ENCODE measurements at regions of chr12 and their contacts with region 1.

Region 1: DNA sequence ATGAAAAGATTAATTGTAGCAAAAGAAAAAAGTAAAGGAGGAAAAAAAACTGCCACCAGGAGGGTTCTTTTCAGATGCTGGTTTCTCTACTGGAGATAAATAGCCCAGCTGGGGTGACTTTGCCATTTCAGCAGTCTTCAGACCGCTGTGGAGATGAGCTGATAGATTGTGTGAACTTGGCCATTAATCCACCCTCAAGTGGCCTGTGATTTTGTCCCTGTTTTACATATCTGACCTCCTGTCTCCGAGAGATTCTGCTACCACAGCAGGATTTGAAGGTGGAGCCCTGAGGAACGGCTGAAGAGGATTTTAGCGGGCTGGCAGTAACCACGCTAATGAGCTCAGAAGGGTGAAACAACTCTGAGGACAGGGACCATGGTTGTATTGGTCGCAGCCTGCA is 72.7 kb downstream of the WSCD2 start:
- DNase-seq: no peak
- H3K4me3 ChIP-seq: no peak overlapping the region
- H3K27ac ChIP-seq: no peak overlapping the region
- H3K4me1 ChIP-seq: no peaks in the 10 kb centered on the region
- H3K27me3 ChIP-seq: peaks cover 31% of the 10 kb centered on the region
- CTCF ChIP-seq: no peak

Region 2: GRCh38 chr12:107984970-107985369 is 216.8 kb before region 1 on chr12:
- intact Hi-C with region 1: loop called (anchors 5 kb)
- DNase-seq: no peak
- H3K4me3 ChIP-seq: no peak overlapping the region
- H3K27ac ChIP-seq: no peak overlapping the region
- H3K4me1 ChIP-seq: no peaks in the 10 kb centered on the region
- H3K27me3 ChIP-seq: peaks cover 88% of the 10 kb centered on the region
- CTCF ChIP-seq: no peak

Region 3: DNA sequence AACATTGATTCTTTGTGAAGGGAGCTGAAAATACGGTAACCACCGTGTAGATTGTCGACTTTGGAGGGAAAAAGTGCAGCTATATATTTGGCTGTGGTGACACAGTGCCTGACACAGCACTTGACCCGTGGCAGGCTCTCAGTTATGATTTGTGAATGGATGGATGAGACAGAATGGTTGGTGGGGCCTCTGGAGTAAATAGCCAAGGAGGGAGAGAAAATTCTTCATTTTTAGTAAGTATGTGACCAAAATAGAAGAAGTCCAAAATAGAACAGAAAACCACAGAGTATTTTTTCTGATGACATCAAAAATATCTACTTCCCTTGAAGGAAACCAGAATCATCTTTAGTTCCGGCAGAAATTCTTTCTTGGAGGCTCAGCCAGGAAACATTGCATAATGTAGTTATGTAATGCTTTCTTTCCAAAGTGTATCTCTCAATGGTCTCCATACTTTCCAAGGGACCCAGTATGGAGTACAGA is 154.7 kb before region 1 on chr12:
- intact Hi-C with region 1: no loop called
- DNase-seq: no peak
- H3K4me3 ChIP-seq: peak overlapping the region; percentile 24
- H3K27ac ChIP-seq: peak overlapping the region; percentile 63
- H3K4me1 ChIP-seq: peaks cover 8% of the 10 kb centered on the region
- H3K27me3 ChIP-seq: peaks cover 56% of the 10 kb centered on the region
- CTCF ChIP-seq: no peak

Region 4: GRCh38 chr12:108289350-108290161 is 87.7 kb after region 1 on chr12:
- intact Hi-C with region 1: no loop called
- DNase-seq: peak; percentile 72
- H3K4me3 ChIP-seq: no peak overlapping the region
- H3K27ac ChIP-seq: peak overlapping the region; percentile 82
- H3K4me1 ChIP-seq: peaks cover 26% of the 10 kb centered on the region
- H3K27me3 ChIP-seq: peaks cover 9% of the 10 kb centered on the region
- CTCF ChIP-seq: no peak

Region 5: DNA sequence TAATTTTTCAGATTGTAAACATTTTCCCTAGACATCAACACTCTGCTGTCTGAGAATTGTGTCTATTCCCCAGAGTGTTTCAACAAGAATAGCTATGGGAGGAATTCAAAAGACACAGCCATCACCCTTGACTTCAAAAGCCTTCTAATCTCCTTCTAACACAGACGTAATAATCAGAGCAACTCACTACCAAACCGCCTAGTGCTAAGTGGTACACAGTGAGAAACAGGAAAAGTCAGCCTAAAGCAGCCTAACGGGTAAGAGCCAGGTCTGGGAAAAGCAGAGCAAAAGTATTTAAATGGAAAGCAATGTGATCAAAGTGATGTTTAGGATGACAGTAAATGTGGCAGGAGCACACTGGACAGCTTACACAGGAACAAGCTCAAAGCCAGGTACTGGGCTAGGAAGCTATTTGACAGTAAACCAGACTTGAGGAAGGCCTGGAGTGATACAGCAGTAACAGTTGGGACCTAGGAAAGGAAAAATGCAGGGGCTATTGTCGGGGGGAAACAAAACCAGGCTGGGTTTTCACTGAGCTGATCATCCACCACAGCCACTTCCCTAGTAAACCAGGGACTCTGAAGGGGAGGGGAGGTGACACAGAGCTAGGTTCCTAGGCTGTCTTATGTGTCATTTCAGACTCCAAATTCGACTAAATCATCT is 500.1 kb after region 1 on chr12:
- intact Hi-C with region 1: no loop called
- DNase-seq: no peak
- H3K4me3 ChIP-seq: peak overlapping the region; percentile 13
- H3K27ac ChIP-seq: peak overlapping the region; percentile 74
- H3K4me1 ChIP-seq: peaks cover 92% of the 10 kb centered on the region
- H3K27me3 ChIP-seq: no peaks in the 10 kb centered on the region
- CTCF ChIP-seq: no peak

Measured in left ventricle myocardium inferior (tissue), 1 donor.